Activated CD4-positive, alpha-beta memory T cell treated with anti-CD3 and anti-CD28 coated beads for 36 hours (primary cell): ENCODE measurements at regions of chr6 and their contacts with region 1.

Region 1: DNA sequence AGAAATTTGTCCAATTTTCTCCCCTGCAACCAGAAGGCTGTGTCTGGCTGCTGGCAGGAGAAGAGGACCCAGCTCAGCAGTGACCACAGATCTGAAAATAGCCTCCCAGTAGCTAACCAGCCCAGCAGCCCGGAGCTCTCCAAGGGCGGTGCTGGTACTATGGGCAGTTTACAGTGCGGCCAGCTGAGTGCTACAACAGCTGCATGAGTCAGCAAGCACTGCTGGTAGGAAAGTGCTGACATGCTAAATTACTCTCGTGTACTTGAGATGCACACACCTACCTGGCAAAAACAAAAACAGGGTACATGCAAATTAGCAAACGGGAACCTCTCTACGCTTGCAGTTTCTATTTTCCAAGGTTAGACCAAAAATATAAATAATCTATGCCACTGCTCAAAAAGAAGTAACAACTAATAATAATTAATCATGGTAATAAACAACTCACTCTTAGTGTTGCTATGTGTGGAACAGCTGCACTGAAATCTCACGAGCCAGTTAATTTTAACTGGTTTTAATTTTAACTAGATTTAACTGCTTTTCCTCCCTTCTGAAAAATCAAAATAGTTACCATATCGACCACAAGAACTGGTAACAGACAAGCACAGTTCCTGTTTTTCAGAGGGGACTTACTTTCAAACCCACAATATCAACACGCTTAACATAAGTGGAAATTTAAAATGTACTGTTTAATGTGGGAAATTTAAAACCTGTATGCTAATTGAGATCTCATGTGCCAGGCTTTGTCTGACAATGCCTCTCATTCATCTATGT is 10.8 kb downstream of the BACH2 start:
- DNase-seq: peak; percentile 75
- H3K4me3 Mint-ChIP-seq: peak overlapping the region; percentile 67
- H3K27ac Mint-ChIP-seq: peak overlapping the region; percentile 89
- H3K4me1 Mint-ChIP-seq: peaks cover 91% of the 10 kb centered on the region
- H3K27me3 Mint-ChIP-seq: no peaks in the 10 kb centered on the region

Region 2: GRCh38 chr6:89829591-89830385 is 456.0 kb before region 1 on chr6 and contains the start of gene CASP8AP2:
- CTCF ChIA-PET with region 1: no interaction called
- POLR2A ChIA-PET with region 1: no interaction called
- intact Hi-C with region 1: loop called (anchors 10 kb)
- DNase-seq: peak; percentile 98
- H3K4me3 Mint-ChIP-seq: peak within 1 kb of the TSS; percentile 99
- H3K27ac Mint-ChIP-seq: peak within 1 kb of the TSS; percentile 95
- H3K4me1 Mint-ChIP-seq: peaks cover 34% of the 10 kb centered on the region
- H3K27me3 Mint-ChIP-seq: no peaks in the 10 kb centered on the region
- total RNA-seq, gene CASP8AP2: 32.4 to 34.2 TPM

Region 3: DNA sequence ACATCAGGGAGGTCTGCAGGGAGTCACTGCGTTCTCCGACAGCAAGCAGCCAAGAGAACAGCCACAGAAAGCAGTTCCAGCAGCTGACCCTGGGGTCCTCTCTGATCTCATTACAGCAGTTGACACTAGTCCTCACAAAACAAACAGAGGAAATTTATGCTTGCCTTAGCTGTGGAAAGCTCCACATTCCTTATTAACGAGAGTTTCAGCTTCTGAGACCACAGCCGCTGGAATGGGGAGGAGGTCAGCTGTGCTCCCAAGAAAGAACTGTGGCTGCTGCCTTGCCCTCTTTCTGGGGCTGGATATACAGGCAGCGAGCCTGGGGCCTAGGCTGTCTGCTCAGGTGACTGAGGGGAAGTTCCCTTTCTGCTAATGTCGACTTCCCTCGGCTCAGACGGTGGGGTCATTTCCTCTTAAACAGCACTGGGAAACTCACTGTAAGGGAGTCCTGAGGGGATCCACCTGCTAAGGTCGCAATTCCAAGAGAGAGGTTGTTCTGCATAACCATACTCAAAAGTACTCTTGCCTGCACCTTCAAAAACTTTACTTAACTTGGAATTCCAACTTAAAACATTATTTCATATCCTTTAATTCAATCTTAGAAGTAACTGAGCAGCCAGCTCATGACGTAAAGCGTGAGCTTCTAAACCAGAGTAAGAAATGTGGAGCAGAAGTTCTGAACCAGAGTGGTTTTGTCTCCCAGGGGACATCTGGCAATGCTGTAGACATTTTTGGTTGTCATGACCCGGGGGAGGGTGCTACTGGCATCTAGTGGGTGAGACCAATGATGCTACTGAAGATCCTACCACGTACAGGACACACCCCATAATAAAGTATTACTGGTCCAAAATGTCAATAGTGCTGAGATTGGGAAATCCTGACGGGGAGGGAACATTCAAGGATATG is 69.5 kb before region 1 on chr6:
- CTCF ChIA-PET with region 1: interaction called, 3 read pairs
- POLR2A ChIA-PET with region 1: interaction called, 6 read pairs
- intact Hi-C with region 1: loop called (anchors 1 kb)
- DNase-seq: peak; percentile 39
- H3K4me3 Mint-ChIP-seq: no peak overlapping the region
- H3K27ac Mint-ChIP-seq: peak overlapping the region; percentile 56
- H3K4me1 Mint-ChIP-seq: peaks cover 27% of the 10 kb centered on the region
- H3K27me3 Mint-ChIP-seq: no peaks in the 10 kb centered on the region

Region 4: DNA sequence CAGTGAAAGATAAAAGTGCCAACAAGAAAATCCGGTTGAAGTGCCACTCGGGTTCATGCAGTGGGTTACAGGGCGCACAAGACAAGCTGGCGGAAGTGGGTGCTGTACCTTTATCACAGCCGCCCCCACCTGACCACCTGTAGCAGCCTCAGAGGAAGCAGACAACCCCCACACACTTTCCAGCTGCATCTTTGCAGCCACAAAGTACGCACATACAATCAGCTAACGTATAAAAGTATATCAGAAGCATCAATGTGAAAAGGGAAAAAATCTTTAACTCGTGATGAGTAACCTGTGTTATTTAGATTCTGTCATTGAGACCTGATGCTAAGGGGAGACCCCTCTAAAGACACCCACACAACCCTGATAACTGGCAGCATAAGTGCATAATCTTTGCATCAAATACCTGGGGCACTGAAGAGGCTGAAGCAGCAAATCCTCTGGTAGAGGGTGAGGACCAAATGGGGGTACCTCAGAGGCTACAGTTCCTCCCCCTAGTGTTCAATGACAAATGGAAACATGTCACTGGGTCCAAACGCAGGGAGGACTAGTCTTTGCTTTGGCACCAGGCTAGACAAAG is 11.3 kb before region 1 on chr6:
- CTCF ChIA-PET with region 1: interaction called, 35 read pairs
- POLR2A ChIA-PET with region 1: interaction called, 30 read pairs
- intact Hi-C with region 1: loop called (anchors 1 kb)
- DNase-seq: peak; percentile 96
- H3K4me3 Mint-ChIP-seq: peak overlapping the region; percentile 27
- H3K27ac Mint-ChIP-seq: peak overlapping the region; percentile 87
- H3K4me1 Mint-ChIP-seq: peaks cover 86% of the 10 kb centered on the region
- H3K27me3 Mint-ChIP-seq: no peaks in the 10 kb centered on the region

Region 5: DNA sequence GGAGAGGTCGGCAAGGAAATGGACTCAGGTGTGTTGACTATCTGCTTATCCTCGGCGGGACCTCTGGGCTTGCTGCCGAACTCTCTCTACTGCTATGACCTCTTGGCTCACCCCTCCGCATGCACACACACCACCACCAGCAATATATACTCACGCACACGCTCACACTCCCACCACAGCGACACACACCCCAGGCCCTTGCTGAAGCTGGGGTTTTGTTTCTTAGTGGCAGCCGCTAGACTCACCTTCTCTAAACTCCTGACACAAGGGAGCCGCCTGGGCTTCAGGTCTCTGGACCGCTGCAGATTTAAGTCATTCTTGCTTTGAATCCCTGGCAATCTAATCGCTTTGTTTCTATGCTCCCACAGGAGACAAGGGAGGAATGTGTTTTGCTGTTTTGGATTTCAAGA is 70.2 kb after region 1 on chr6:
- CTCF ChIA-PET with region 1: no interaction called
- POLR2A ChIA-PET with region 1: no interaction called
- intact Hi-C with region 1: no loop called
- DNase-seq: no peak
- H3K4me3 Mint-ChIP-seq: no peak overlapping the region
- H3K27ac Mint-ChIP-seq: no peak overlapping the region
- H3K4me1 Mint-ChIP-seq: peaks cover 15% of the 10 kb centered on the region
- H3K27me3 Mint-ChIP-seq: peaks cover 1% of the 10 kb centered on the region

Region 6: GRCh38 chr6:90369024-90369519 is 83.3 kb after region 1 on chr6:
- CTCF ChIA-PET with region 1: interaction called, 4 read pairs
- POLR2A ChIA-PET with region 1: no interaction called
- intact Hi-C with region 1: loop called (anchors 1 kb)
- DNase-seq: peak; percentile 63
- H3K4me3 Mint-ChIP-seq: no peak overlapping the region
- H3K27ac Mint-ChIP-seq: peak overlapping the region; percentile 35
- H3K4me1 Mint-ChIP-seq: peaks cover 20% of the 10 kb centered on the region
- H3K27me3 Mint-ChIP-seq: no peaks in the 10 kb centered on the region

Region 7: DNA sequence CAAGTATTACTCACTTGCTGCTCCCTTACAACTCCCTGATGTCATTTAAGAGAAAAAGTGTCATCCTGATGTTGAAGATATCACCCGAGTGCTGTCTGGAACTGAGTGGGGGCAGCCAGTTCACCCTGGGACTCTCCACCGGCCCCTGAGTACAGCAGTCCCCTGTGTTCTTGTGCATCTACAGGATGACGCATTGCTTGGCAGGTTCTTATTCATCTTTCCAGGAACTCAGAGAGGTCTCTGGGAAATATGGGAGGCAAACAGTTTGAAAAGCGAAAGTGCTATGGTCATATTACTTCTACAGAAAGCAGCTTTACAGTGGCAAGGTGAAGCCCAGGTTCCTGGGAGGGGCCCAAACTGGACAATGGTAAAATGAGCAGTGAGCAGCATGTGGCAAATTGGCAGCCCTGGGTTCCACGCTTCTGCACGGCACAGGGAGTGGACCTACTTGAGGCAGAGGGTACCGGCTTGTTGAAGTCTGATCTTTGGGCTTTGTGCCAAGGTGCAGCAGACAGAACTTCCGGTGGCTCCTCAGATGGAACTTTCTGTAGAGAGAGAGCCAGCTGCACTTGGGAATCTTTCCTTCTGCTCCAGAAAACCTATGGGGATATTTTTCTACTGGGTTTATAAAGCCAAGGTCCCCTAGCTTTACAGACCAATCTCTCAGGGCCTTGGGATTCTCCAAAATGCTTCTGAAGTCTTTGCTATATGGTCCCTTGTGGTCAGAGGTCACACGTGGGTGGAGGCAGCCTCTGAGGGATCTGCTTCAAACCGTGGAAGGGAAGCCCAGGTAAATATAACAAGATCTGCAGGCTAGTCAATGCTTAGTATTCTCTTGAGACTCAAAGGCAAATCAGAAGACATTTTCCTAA is 172.8 kb after region 1 on chr6:
- CTCF ChIA-PET with region 1: interaction called, 12 read pairs
- POLR2A ChIA-PET with region 1: interaction called, 3 read pairs
- intact Hi-C with region 1: loop called (anchors 1 kb)
- DNase-seq: peak; percentile 94
- H3K4me3 Mint-ChIP-seq: peak overlapping the region; percentile 40
- H3K27ac Mint-ChIP-seq: peak overlapping the region; percentile 95
- H3K4me1 Mint-ChIP-seq: peaks cover 87% of the 10 kb centered on the region
- H3K27me3 Mint-ChIP-seq: no peaks in the 10 kb centered on the region

Region 8: DNA sequence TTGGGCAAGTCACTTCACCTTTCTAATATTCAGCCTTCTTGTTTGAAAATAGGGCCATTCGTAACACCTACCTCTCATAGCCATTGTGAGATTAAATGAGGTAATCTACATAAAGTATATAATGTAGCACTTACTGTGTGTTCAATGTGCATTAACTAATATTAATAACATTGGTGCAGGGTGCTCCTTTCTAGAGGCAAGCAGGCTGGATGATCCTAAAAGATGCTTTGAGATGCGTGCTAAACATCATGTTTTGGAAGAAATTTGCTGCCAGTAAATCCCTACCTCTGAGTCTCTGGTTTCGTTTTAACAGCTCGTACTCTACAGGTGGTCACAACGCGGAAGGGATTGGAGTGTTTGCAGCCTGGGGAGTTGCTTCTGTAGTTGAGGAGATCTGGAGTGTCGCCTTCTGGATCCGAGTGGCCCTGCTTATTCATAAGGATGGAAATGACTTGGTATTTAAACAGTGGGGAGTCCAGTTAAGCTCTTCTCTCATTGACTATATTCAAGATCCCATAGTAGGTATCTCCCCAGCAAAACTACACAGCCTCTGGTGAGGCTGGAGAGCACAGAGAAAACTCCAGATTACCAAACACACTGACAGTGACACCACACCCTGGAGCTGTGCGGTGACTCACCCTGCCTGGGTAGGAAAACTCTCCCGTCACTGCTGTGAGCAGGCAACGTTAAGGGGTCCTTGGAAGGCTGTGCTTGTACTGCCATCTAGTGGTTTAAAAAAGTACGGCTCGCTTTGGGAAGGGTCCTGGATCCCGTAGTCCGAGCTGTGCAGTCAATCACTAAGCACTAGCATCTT is 193.2 kb after region 1 on chr6:
- CTCF ChIA-PET with region 1: interaction called, 144 read pairs
- POLR2A ChIA-PET with region 1: interaction called, 16 read pairs
- intact Hi-C with region 1: loop called (anchors 1 kb)
- DNase-seq: peak; percentile 91
- H3K4me3 Mint-ChIP-seq: peak overlapping the region; percentile 3
- H3K27ac Mint-ChIP-seq: peak overlapping the region; percentile 66
- H3K4me1 Mint-ChIP-seq: peaks cover 58% of the 10 kb centered on the region
- H3K27me3 Mint-ChIP-seq: no peaks in the 10 kb centered on the region